H1 (cell line): ENCODE measurements at regions of chr15 and their contacts with region 1.

Region 1: DNA sequence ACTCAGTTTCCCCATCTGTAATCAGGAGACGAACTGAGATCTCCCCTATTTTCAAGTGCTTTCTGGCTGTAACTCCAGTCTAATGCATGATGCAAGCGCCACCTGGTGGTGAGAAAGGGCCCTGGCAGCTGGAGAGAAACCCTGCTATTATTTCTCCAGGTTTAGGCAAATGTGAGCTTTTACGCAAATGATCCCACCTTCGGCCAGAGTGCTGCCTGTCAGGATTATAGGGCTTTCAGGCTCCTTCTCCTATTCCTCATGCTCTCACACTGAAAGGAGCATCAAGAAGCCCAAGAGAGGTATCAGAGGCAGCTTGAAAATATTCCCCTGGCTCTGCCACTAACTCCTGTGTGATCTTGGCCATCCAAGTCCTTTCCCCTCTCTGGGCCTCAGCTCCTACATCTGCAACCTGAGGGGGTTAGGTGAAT is 93.9 kb upstream of the RASGRF1 start:
- DNase-seq: peak in 1 of 2 experiments; percentile 87
- H3K4me3 ChIP-seq: no peak overlapping the region
- H3K27ac ChIP-seq: no peak overlapping the region
- H3K4me1 ChIP-seq: no peaks in the 10 kb centered on the region; a peak in 1 of 7 replicates
- H3K27me3 ChIP-seq: no peaks in the 10 kb centered on the region; a peak in 2 of 7 replicates
- CTCF ChIP-seq: peak; percentile 79 to 97 (median 96)
- EP300 ChIP-seq: no peak
- POLR2A ChIP-seq: no peak
- RAD21 ChIP-seq: peak; percentile 94 to 97

Region 2: DNA sequence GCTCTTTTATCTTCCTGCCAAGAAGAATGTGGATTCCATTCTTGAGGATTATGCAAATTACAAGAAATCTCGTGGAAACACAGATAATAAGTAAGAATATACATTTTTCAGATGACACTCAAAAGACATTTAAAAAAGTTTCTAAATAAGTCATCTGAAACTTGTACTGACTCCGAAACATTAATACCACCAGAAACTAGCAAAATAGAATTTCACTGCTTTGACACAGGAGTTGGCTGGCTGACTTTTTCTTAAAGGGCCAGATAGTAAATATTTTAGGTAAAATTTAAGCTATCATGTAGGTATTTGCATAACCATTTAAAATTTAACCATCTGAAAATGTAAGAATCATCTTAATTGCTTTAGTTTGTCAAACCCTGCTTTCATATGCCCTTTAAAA is 290.9 kb before region 1 on chr15:
- CTCF ChIA-PET with region 1: no interaction called
- POLR2A ChIA-PET with region 1: no interaction called
- DNase-seq: no peak
- H3K4me3 ChIP-seq: no peak overlapping the region
- H3K27ac ChIP-seq: no peak overlapping the region
- H3K4me1 ChIP-seq: no peaks in the 10 kb centered on the region
- H3K27me3 ChIP-seq: no peaks in the 10 kb centered on the region
- CTCF ChIP-seq: no peak
- EP300 ChIP-seq: no peak
- POLR2A ChIP-seq: no peak
- RAD21 ChIP-seq: no peak

Region 3: DNA sequence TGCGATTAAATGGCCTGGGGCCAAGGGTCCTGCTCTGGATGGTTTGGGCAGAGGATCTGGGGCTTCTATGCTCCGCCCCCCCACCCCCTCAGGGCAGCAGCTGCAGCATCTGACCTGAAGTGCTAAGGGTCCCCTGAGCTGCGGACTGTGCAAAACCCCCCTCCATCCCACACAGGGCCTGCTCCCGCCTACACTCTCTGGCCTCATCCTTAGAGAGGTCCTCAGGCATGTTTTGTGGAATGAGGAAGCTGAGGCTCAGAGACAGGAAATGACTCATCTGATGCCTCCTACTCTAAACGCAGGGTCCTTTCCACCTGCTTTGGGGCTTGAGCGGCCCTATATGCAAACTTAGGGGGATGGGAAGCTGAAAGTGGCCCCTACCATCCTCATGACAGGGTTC is 180.1 kb before region 1 on chr15:
- CTCF ChIA-PET with region 1: interaction called, 12 read pairs
- POLR2A ChIA-PET with region 1: interaction called, 3 read pairs
- DNase-seq: no peak
- H3K4me3 ChIP-seq: no peak overlapping the region
- H3K27ac ChIP-seq: no peak overlapping the region
- H3K4me1 ChIP-seq: peaks cover 0 to 10% (median under 1%) of the 10 kb centered on the region in 4 experiments; a peak in 4 of 7 replicates
- H3K27me3 ChIP-seq: no peaks in the 10 kb centered on the region; a peak in 2 of 7 replicates
- CTCF ChIP-seq: no peak
- EP300 ChIP-seq: no peak
- POLR2A ChIP-seq: no peak
- RAD21 ChIP-seq: no peak

Region 4: DNA sequence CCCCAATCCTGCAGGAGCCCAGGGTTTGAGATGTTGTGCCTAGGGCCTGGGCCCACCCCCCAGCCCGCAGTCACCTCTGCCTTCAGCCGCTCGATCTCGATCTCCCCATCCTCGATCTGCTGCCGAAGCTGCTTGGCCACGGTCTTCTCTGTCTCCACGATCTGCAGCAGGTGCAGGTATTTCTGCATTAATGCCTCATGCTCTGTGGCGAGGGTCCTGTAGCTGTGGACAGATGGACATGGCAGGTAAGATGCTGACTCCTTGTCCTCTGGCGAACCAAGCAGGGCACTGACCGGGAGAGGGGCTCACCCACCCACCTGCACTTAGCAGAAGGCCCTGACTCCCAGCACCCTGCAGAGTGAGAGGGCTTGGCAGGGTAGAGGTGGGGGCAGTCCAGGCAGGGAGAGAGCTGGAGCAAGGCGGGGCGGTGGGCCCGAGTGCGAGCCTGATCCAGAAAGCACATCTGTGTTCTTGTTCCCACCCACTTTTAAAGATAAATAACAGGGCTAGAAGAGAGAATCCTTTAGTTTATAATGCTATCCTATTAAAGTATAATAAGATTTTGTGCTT is 126.1 kb before region 1 on chr15:
- CTCF ChIA-PET with region 1: interaction called, 17 read pairs
- POLR2A ChIA-PET with region 1: no interaction called
- DNase-seq: no peak
- H3K4me3 ChIP-seq: no peak overlapping the region
- H3K27ac ChIP-seq: no peak overlapping the region
- H3K4me1 ChIP-seq: peaks cover 6 to 16% (median 12%) of the 10 kb centered on the region in 4 experiments; a peak in 6 of 7 replicates
- H3K27me3 ChIP-seq: peaks cover 24 to 60% (median 53%) of the 10 kb centered on the region in 4 experiments
- CTCF ChIP-seq: no peak
- EP300 ChIP-seq: no peak
- POLR2A ChIP-seq: no peak
- RAD21 ChIP-seq: no peak

Region 5: DNA sequence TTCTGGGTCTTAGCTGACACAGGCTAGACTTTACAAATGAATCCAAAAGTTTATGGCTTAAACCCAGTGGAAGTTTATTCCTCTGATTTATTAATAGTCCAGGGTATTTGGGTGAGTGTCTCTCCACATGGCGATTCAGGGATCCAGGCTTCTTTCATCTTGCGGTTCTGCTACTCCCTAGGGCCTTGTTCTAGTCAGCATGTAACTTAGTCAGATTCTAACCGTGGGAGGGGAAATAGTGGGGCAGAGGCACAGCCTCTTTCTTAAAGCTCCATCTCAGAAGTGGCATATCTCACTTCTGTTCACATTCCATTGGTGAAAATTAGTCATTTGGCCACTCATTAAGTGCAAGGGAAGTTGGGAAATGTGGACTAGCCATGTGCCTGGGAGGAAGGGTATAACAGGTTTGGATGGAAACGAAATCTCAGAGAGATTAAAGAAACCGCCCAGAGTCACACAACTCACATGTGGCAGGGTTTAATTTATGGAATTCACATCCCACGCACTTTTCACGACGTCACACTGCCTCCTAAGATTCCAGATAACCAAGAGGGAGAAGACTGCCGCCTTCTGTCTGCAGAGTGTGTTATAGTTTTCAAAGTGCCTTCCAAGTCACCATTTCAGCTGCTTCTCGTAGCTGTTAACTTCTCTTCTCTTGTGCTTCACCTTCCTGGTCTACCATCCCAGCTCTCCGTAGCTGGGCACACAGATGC is 82.5 kb before region 1 on chr15:
- CTCF ChIA-PET with region 1: interaction called, 10 read pairs
- POLR2A ChIA-PET with region 1: no interaction called
- DNase-seq: peak in 1 of 2 experiments; percentile 11
- H3K4me3 ChIP-seq: no peak overlapping the region
- H3K27ac ChIP-seq: no peak overlapping the region
- H3K4me1 ChIP-seq: no peaks in the 10 kb centered on the region
- H3K27me3 ChIP-seq: peaks cover 0 to 9% (median 4%) of the 10 kb centered on the region in 4 experiments; a peak in 4 of 7 replicates
- CTCF ChIP-seq: no peak; a peak in 1 of 4 replicates
- EP300 ChIP-seq: no peak
- POLR2A ChIP-seq: no peak
- RAD21 ChIP-seq: peak in 1 of 2 experiments; percentile 27; a peak in 1 of 4 replicates

Region 6: GRCh38 chr15:79130535-79131130 is 53.8 kb before region 1 on chr15:
- CTCF ChIA-PET with region 1: interaction called, 22 read pairs
- POLR2A ChIA-PET with region 1: no interaction called
- DNase-seq: no peak
- H3K4me3 ChIP-seq: no peak overlapping the region
- H3K27ac ChIP-seq: no peak overlapping the region
- H3K4me1 ChIP-seq: peaks cover 0 to 5% (median 2%) of the 10 kb centered on the region in 4 experiments; a peak in 4 of 7 replicates
- H3K27me3 ChIP-seq: no peaks in the 10 kb centered on the region
- CTCF ChIP-seq: peak; percentile 2 to 68 (median 64)
- EP300 ChIP-seq: no peak
- POLR2A ChIP-seq: no peak
- RAD21 ChIP-seq: peak; percentile 42 to 63

Region 7: DNA sequence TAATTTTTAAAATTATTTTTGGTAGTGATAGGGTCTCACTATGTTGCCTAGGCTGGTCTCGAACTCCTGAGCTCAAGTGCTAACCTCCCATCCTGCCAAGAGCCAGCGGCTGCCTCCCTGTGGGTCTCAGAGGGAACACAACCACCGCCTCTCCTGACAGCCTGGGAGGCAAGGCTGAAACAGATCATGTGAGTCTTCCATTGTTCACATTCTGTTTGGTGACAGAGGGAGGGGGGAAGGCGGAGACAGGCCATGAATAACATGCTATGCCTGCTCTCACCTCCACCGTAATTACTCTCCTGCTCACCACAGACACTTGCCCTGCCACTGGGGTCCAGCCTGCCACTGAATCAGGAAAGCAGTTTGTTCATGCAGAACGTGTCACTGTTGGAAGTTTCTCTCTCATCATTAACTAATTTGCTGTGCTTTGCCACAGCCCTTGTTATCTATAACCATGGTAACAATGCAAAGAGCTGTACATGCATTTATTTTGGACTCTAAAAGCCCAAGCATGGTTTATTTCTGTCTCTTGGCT is 15.5 kb before region 1 on chr15:
- CTCF ChIA-PET with region 1: interaction called, 59 read pairs
- POLR2A ChIA-PET with region 1: interaction called, 3 read pairs
- DNase-seq: peak in 1 of 2 experiments; percentile 58
- H3K4me3 ChIP-seq: no peak overlapping the region
- H3K27ac ChIP-seq: no peak overlapping the region
- H3K4me1 ChIP-seq: peaks cover 2 to 14% (median 6%) of the 10 kb centered on the region in 4 experiments; a peak in 5 of 7 replicates
- H3K27me3 ChIP-seq: no peaks in the 10 kb centered on the region; a peak in 1 of 7 replicates
- CTCF ChIP-seq: peak; percentile 39 to 68 (median 60)
- EP300 ChIP-seq: no peak
- POLR2A ChIP-seq: no peak
- RAD21 ChIP-seq: peak; percentile 59 to 63